GM10248 (cell line): ENCODE measurements at regions of chr15 and their contacts with region 1.

Region 1: DNA sequence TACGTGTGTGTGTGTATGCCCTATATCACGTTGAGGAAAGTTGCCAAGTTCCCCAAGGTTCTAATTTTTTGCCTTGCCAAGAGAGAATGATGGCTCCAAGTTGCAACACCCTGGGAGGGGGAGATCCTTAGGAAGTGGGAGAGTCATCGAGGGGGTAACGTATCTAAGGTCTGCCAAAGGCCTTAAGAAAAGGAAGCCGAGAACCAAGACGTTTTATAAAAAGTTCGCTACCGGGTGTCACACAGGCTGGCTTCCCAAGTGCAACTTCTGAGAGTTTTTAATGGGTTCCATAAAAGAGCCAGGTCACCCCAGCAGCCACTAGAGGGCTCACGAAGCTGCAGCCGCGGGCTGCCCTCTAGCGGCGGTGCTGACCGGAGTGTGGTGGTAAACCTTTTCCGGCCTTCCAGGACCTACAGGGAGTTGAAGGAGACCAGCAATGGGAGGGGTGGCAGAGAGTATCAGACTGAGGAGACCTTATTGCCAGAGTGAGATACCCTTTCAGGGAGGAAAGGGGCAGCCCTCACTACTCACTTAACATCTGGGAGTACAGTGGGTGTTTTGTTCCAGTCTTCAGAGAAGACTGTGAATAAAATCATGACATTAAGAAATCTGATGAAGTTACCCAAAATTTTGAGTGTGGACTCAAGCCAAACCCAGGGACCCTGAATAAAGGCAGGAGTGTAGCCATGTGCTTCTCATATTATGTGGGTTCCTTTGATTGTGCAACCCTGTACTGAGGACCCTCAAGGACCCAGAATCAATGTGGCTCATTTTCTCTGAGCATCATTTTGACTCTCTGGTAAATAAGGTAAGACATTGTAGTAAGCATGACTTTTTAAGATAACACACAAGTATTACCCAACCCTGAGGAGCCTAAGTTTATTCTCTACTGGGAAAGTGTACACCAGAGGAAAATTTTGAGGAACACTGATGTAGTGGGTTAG is 2.5 kb upstream of the RFX7 start:
- DNase-seq: peak; percentile 81
- CTCF ChIP-seq: peak; percentile 100

Region 2: GRCh38 chr15:56180851-56181250 is 65.3 kb before region 1 on chr15:
- CTCF ChIA-PET with region 1: interaction called, 11 read pairs
- POLR2A ChIA-PET with region 1: no interaction called
- DNase-seq: no peak
- CTCF ChIP-seq: no peak

Region 3: DNA sequence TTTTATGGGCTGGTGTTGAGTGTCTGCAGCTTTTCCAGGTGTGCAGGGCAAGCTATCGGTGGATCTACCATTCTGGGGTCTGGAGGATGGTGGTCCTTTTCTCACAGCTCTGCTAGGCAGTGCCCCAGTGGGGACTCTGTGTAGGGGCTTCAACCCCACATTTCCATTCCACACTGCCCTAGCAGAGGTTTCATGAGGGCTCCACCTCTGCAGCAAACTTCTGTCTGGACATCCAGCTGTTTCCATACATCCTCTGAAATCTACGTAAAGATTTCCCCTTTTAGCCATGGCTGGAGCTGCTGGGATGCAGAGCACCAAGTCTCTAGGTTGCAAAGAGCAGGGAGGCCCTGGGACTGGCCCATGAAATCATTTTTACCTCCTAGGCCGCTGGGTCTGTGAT is 14.1 kb before region 1 on chr15:
- CTCF ChIA-PET with region 1: interaction called, 20 read pairs
- POLR2A ChIA-PET with region 1: no interaction called
- DNase-seq: no peak
- CTCF ChIP-seq: no peak

Region 4: DNA sequence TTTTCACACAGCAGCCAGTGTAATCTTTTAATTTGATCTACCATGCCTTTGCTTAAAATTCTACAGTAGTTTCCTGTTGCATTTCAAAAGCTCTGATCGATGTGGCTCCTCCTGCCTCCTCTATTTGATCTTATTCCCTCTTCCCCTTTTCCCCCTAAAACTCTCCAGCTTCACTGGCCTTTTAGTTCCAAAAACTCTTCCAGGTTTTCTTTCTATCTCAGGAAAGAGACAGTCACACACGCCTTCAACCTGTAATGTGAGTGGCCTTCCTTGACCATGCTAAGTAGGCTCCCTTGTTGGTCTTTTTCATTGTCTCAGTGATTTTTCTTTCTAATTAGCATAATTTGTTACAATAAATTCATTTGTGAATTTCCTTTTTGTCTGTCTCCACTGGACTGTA is 120.1 kb after region 1 on chr15:
- CTCF ChIA-PET with region 1: interaction called, 13 read pairs
- POLR2A ChIA-PET with region 1: no interaction called
- DNase-seq: no peak
- CTCF ChIP-seq: no peak

Region 5: GRCh38 chr15:56428821-56429458 is 182.8 kb after region 1 on chr15:
- CTCF ChIA-PET with region 1: interaction called, 126 read pairs
- POLR2A ChIA-PET with region 1: interaction called, 6 read pairs
- DNase-seq: peak; percentile 38
- CTCF ChIP-seq: peak; percentile 39